ENCODE measurements at regions of chr20 and their contacts with region 1.

Region 1: DNA sequence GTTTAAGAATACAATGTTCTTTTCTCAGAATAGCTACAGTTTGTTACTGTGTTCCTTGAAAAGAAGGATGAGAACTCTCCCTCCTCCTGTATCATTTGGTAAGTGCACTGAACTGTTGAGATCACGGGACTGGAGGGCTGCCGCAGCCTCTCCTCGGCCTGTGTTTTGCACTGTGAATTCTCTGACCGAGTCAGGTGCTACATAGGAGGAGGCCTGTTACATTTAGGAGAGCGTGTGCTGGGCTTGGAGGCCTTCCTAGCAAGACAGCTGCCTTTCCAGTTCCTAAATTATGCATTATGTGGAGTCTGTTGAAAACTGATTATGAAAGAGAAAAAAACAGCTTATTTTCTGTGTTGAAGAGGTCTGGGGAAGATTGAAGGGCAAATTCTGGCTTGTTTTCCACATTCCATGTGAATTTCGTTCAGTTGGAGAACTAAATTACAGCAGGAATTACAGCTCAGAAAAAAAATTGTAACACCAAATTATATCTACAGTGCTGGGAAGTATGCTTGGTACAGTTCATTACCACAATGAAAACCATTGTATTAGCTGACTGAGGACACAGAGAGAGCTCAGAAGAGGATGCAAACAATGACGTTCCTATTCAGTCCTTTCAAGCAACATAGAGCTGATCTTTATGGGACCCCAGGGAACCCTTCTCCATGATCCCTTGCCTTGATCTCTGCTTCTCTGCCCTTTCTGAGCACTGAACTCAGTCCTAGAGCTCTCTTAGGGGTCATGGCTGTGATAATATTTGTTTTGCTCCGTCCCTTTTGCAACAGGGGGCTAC is 2.8 kb downstream of the TMC2 start:
- DNase-seq: no peak
- H3K4me3 ChIP-seq: no peak overlapping the region
- H3K27ac ChIP-seq: no peak overlapping the region
- H3K4me1 ChIP-seq: no peaks in the 10 kb centered on the region
- H3K27me3 ChIP-seq: peaks cover 0 to 74% (median 43%) of the 10 kb centered on the region in 3 donors
- CTCF ChIP-seq: no peak
- EP300 ChIP-seq: no peak
- POLR2A ChIP-seq: no peak

Region 2: GRCh38 chr20:2470423-2471193 is 68.5 kb before region 1 on chr20 and contains the start of gene SNRPB:
- intact Hi-C with region 1: no loop called
- DNase-seq: peak; percentile 98 to 99
- H3K4me3 ChIP-seq: peak within 1 kb of the TSS; percentile 61 to 90 (median 76)
- H3K27ac ChIP-seq: peak within 1 kb of the TSS; percentile 89 to 97 (median 94)
- H3K4me1 ChIP-seq: peaks cover 14 to 35% (median 32%) of the 10 kb centered on the region in 4 donors
- H3K27me3 ChIP-seq: no peaks in the 10 kb centered on the region
- CTCF ChIP-seq: no peak
- EP300 ChIP-seq: no peak
- POLR2A ChIP-seq: peak in 2 of 4 donors; percentile 73 to 84
- total RNA-seq, gene SNRPB: 46.4 to 329 (median 141) TPM

Region 3: DNA sequence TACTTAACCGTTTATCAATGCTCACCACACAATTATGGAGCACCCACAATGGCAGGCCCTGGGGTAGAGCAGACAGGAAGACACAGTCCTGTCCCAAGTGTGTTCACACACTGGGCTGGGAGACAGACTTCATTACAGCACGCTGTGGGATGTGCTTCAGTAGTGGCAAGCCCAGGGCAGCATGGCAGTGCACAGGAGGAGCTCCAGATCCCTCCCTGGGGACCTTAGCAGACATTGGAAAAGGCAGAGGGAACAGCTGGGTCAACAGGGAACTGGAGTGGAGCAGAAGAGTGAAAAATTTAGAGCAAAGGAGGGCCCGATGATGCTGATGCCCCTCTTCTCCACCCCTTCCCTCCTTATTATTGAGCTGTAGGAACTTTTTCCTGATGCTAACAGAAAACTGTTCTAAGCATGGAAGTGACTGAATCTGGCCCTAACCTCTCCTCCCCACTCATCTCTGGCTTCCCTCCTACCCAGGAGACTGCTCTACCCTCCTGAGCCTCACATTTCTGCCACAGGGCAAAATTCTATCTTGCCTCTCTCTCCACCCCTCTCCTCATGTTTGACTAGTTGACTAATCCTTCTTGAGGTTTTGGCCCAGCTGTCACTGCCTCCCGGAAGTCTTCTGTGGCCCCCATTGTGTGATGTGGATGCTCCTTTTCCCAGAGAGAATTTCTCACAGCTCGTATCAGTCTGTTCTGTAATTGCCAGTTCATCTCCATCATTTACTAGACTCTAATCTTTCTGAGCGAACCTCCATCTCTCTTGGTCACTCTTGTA is 72.0 kb after region 1 on chr20:
- intact Hi-C with region 1: no loop called
- DNase-seq: no peak
- H3K4me3 ChIP-seq: no peak overlapping the region
- H3K27ac ChIP-seq: no peak overlapping the region
- H3K4me1 ChIP-seq: no peaks in the 10 kb centered on the region
- H3K27me3 ChIP-seq: peaks cover 0 to 5% (median 0%) of the 10 kb centered on the region in 3 donors
- CTCF ChIP-seq: no peak
- EP300 ChIP-seq: no peak
- POLR2A ChIP-seq: no peak

Region 4: GRCh38 chr20:2643708-2644107 is 104.6 kb after region 1 on chr20:
- intact Hi-C with region 1: loop called (anchors 10 kb)
- DNase-seq: no peak
- H3K4me3 ChIP-seq: no peak overlapping the region
- H3K27ac ChIP-seq: no peak overlapping the region
- H3K4me1 ChIP-seq: peaks cover 0 to 5% (median 0%) of the 10 kb centered on the region in 4 donors
- H3K27me3 ChIP-seq: no peaks in the 10 kb centered on the region
- CTCF ChIP-seq: no peak
- EP300 ChIP-seq: no peak
- POLR2A ChIP-seq: no peak